B cell (primary cell): ENCODE measurements at regions of chrX and their contacts with region 1.

Region 1: GRCh38 chrX:41333744-41334259 is at the start of gene DDX3X:
- DNase-seq: peak; percentile 93
- ATAC-seq: peak; percentile 59
- H3K4me3 ChIP-seq: peak within 1 kb of the TSS; percentile 81 to 100 (median 100)
- H3K4me3 Mint-ChIP-seq: peak within 1 kb of the TSS; percentile 96
- H3K27ac ChIP-seq: peak within 1 kb of the TSS; percentile 99 to 100
- H3K27ac Mint-ChIP-seq: peak within 1 kb of the TSS; percentile 99
- H3K4me1 ChIP-seq: peaks cover 27 to 47% of the 10 kb centered on the region in 2 donors
- H3K4me1 Mint-ChIP-seq: peaks cover 35% of the 10 kb centered on the region
- H3K27me3 ChIP-seq: no peaks in the 10 kb centered on the region
- H3K27me3 Mint-ChIP-seq: no peaks in the 10 kb centered on the region
- CTCF ChIP-seq: peak; percentile 9
- total RNA-seq, gene DDX3X: 272 and 289 TPM in 2 replicates

Region 2: GRCh38 chrX:40647307-40648197 is 686.2 kb before region 1 on chrX and contains the start of gene CXorf38:
- CTCF ChIA-PET with region 1: no interaction called
- POLR2A ChIA-PET with region 1: no interaction called
- intact Hi-C with region 1: loop called (anchors 10 kb)
- DNase-seq: peak; percentile 94
- ATAC-seq: peak; percentile 68
- H3K4me3 ChIP-seq: peak within 1 kb of the TSS; percentile 56 to 87 (median 76)
- H3K4me3 Mint-ChIP-seq: peak within 1 kb of the TSS; percentile 94
- H3K27ac ChIP-seq: peak within 1 kb of the TSS; percentile 72 to 94
- H3K27ac Mint-ChIP-seq: peak within 1 kb of the TSS; percentile 92
- H3K4me1 ChIP-seq: peaks cover 38 to 40% of the 10 kb centered on the region in 2 donors
- H3K4me1 Mint-ChIP-seq: peaks cover 35% of the 10 kb centered on the region
- H3K27me3 ChIP-seq: no peaks in the 10 kb centered on the region
- H3K27me3 Mint-ChIP-seq: no peaks in the 10 kb centered on the region
- CTCF ChIP-seq: no peak
- total RNA-seq, gene CXorf38: 26.4 and 27.4 TPM in 2 replicates

Region 3: DNA sequence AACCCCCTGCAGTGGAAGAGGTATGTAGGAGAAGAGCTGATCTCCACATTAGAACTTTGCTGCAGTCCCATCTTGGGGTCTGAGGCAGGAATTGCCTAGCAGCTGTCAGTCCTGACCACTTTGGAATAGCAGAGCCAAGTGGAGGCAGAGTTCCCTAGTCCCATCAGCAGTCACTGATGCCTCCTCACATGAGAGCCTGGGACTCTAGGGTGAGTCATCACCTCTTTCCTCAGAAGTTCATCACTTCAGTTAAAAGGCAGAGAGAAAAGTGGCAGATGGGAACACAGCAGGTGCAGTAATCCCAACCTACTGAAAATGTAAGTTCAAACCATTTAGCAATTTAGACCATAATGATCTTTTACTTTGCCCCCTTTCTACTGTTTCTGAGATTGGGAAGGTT is 524.6 kb before region 1 on chrX:
- CTCF ChIA-PET with region 1: no interaction called
- POLR2A ChIA-PET with region 1: no interaction called
- intact Hi-C with region 1: no loop called
- DNase-seq: no peak
- ATAC-seq: no peak
- H3K4me3 ChIP-seq: no peak overlapping the region
- H3K4me3 Mint-ChIP-seq: no peak overlapping the region
- H3K27ac ChIP-seq: no peak overlapping the region
- H3K27ac Mint-ChIP-seq: no peak overlapping the region
- H3K4me1 ChIP-seq: no peaks in the 10 kb centered on the region
- H3K4me1 Mint-ChIP-seq: no peaks in the 10 kb centered on the region
- H3K27me3 ChIP-seq: no peaks in the 10 kb centered on the region
- H3K27me3 Mint-ChIP-seq: no peaks in the 10 kb centered on the region
- CTCF ChIP-seq: no peak

Region 4: DNA sequence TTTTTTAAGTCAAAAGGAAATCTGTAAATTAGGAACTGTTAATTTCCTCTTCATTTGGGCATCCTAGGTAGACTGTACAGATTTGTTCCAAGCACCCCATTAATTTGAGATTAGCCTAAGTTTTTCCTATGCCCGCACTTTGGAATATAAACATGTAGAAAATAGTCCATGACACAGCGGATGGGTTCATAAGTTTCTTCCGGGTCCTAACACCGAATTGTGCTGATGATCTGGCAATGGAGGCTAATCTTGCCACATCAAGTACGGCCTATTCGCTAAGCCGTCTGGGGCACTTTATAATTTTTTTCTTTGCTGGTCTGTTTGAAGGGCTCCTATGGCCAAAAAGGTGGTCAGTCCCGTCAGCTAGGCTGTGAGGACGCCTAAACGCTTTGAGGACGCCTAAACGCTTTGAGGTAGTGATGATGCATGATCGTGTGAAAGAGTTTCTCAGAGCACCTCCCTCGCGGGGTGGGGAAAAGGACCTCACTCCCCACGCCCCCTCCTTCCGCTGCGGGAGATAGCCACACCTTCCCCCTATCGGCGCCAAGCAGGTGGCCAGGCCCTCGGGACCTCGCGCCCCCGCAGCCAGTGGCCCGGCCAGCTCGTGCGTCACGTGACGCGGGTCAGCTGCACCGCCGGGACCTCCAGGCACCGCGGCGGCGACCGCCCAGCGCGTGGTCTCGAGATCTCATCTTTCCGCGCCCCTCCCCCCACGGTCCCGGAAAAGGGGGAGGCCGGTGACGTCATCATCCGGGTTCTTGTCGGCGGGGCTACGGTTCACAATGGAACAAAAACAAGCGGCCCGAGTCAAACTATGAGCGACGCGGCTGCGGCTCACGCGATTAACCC is 249.5 kb before region 1 on chrX:
- CTCF ChIA-PET with region 1: no interaction called
- POLR2A ChIA-PET with region 1: interaction called, 6 read pairs
- intact Hi-C with region 1: loop called (anchors 2 kb)
- DNase-seq: peak; percentile 96
- ATAC-seq: peak; percentile 63
- H3K4me3 ChIP-seq: peak overlapping the region; percentile 46 to 93 (median 75)
- H3K4me3 Mint-ChIP-seq: peak overlapping the region; percentile 94
- H3K27ac ChIP-seq: peak overlapping the region; percentile 100
- H3K27ac Mint-ChIP-seq: peak overlapping the region; percentile 100
- H3K4me1 ChIP-seq: peaks cover 25 to 33% of the 10 kb centered on the region in 2 donors
- H3K4me1 Mint-ChIP-seq: peaks cover 30% of the 10 kb centered on the region
- H3K27me3 ChIP-seq: no peaks in the 10 kb centered on the region
- H3K27me3 Mint-ChIP-seq: no peaks in the 10 kb centered on the region
- CTCF ChIP-seq: no peak

Region 5: GRCh38 chrX:41224606-41225005 is 109.2 kb before region 1 on chrX:
- CTCF ChIA-PET with region 1: no interaction called
- POLR2A ChIA-PET with region 1: no interaction called
- intact Hi-C with region 1: no loop called
- DNase-seq: no peak
- ATAC-seq: no peak
- H3K4me3 ChIP-seq: no peak overlapping the region
- H3K4me3 Mint-ChIP-seq: no peak overlapping the region
- H3K27ac ChIP-seq: no peak overlapping the region
- H3K27ac Mint-ChIP-seq: no peak overlapping the region
- H3K4me1 ChIP-seq: no peaks in the 10 kb centered on the region
- H3K4me1 Mint-ChIP-seq: no peaks in the 10 kb centered on the region
- H3K27me3 ChIP-seq: no peaks in the 10 kb centered on the region
- H3K27me3 Mint-ChIP-seq: no peaks in the 10 kb centered on the region
- CTCF ChIP-seq: no peak

Region 6: DNA sequence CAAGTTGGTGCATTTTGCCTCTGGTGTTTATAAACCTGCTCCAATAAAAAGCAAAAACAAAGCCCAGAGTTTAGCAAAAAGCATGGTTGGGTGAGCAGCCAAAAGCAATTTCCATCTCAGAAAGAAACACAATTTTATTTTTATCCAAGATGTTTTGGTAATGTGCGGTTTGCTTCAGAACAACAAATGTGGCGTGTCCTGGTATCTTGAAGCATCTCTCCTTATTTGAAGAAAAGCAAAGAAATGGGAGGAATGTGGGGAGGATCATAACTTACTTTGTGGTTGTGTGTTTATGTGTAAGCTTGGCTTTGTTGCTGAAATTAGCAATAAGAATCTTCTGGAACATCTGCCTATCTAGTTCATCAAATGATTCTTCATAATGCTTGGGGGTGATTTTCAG is 88.2 kb before region 1 on chrX:
- CTCF ChIA-PET with region 1: no interaction called
- POLR2A ChIA-PET with region 1: no interaction called
- intact Hi-C with region 1: no loop called
- DNase-seq: no peak
- ATAC-seq: no peak
- H3K4me3 ChIP-seq: no peak overlapping the region
- H3K4me3 Mint-ChIP-seq: no peak overlapping the region
- H3K27ac ChIP-seq: no peak overlapping the region
- H3K27ac Mint-ChIP-seq: no peak overlapping the region
- H3K4me1 ChIP-seq: peaks cover 4 to 5% of the 10 kb centered on the region in 2 donors
- H3K4me1 Mint-ChIP-seq: peaks cover 4% of the 10 kb centered on the region
- H3K27me3 ChIP-seq: no peaks in the 10 kb centered on the region
- H3K27me3 Mint-ChIP-seq: no peaks in the 10 kb centered on the region
- CTCF ChIP-seq: no peak

Region 7: GRCh38 chrX:41259516-41259915 is 74.3 kb before region 1 on chrX:
- CTCF ChIA-PET with region 1: interaction called, 3 read pairs
- POLR2A ChIA-PET with region 1: interaction called, 10 read pairs
- intact Hi-C with region 1: no loop called
- DNase-seq: no peak
- ATAC-seq: no peak
- H3K4me3 ChIP-seq: no peak overlapping the region
- H3K4me3 Mint-ChIP-seq: no peak overlapping the region
- H3K27ac ChIP-seq: no peak overlapping the region
- H3K27ac Mint-ChIP-seq: no peak overlapping the region
- H3K4me1 ChIP-seq: peaks cover 10% of the 10 kb centered on the region in 2 donors
- H3K4me1 Mint-ChIP-seq: peaks cover 11% of the 10 kb centered on the region
- H3K27me3 ChIP-seq: no peaks in the 10 kb centered on the region
- H3K27me3 Mint-ChIP-seq: no peaks in the 10 kb centered on the region
- CTCF ChIP-seq: no peak

Region 8: DNA sequence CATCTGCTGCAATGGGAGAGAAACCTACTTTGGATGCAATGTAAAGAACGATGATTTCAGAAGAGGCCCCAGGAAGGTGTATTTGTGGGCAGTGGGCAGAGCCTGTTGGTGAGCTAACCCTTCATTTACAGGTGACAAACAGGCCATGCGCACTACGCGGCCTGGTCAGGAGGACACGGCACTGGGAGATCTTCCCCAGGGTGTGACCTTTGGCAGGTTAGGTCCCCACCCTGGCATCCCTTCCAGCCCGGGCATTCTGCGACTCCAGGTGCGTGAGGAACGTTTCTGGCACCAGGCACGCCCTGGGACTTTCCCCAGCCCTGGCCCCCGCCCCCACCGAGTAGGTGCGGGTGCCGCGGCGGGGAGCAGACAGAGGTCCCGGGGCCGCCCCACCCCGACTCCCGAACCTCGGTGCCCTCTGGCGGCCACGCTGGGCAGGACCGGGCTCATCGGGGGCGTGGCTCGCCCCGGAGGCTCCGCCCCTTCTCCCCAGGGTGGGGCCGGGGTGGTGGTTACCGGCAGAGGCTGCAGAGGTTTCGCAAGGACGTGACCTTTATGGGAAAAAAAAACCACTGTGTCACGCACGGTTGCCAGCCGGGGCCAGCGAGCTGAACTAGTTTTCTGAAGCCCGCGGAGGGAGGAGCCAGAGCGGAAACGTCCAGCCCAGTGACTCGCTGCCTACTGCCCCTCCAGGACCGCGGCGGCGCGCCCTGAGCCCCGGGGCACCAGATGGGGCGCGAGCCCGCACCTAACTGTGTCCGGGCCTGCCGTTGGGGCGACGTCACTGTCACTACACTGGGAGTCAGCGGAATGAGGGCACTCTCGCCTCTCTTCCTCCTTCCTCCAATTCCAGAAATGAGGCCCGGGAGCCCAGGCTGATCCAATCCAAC is 108.4 kb after region 1 on chrX:
- CTCF ChIA-PET with region 1: no interaction called
- POLR2A ChIA-PET with region 1: interaction called, 11 read pairs
- intact Hi-C with region 1: loop called (anchors 2 kb)
- DNase-seq: peak; percentile 89
- ATAC-seq: peak; percentile 92
- H3K4me3 ChIP-seq: peak overlapping the region in 4 of 5 experiments; percentile 23 to 58 (median 52)
- H3K4me3 Mint-ChIP-seq: peak overlapping the region; percentile 79
- H3K27ac ChIP-seq: peak overlapping the region; percentile 6 to 49
- H3K27ac Mint-ChIP-seq: peak overlapping the region; percentile 50
- H3K4me1 ChIP-seq: peaks cover 17 to 28% of the 10 kb centered on the region in 2 donors
- H3K4me1 Mint-ChIP-seq: peaks cover 23% of the 10 kb centered on the region
- H3K27me3 ChIP-seq: no peaks in the 10 kb centered on the region
- H3K27me3 Mint-ChIP-seq: no peaks in the 10 kb centered on the region
- CTCF ChIP-seq: peak; percentile 61

Region 9: DNA sequence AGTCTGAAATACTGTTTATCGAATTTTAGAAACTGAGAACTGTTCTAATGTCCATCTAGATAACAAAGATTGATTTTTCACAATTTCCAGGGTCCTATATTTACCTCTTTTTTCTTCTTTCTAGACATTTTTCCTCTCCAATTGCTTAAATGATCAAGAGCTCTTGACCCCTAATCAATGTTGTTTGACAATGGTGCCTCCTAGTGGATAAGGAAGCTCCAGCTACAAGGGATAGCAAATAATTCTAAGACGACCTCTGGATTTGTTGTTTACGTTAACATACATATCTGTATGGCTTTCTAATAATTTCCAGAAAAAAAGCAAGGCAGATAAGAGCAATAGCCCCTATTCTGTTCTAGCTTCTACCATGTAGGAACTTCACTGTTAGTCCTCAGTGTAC is 426.0 kb after region 1 on chrX:
- CTCF ChIA-PET with region 1: no interaction called
- POLR2A ChIA-PET with region 1: interaction called, 12 read pairs
- intact Hi-C with region 1: no loop called
- DNase-seq: peak; percentile 55
- ATAC-seq: no peak
- H3K4me3 ChIP-seq: no peak overlapping the region
- H3K4me3 Mint-ChIP-seq: no peak overlapping the region
- H3K27ac ChIP-seq: no peak overlapping the region
- H3K27ac Mint-ChIP-seq: no peak overlapping the region
- H3K4me1 ChIP-seq: no peaks in the 10 kb centered on the region
- H3K4me1 Mint-ChIP-seq: peaks cover 3% of the 10 kb centered on the region
- H3K27me3 ChIP-seq: no peaks in the 10 kb centered on the region
- H3K27me3 Mint-ChIP-seq: no peaks in the 10 kb centered on the region
- CTCF ChIP-seq: peak; percentile 64